ENCODE measurements at regions of chr19 and their contacts with region 1.

Region 1: DNA sequence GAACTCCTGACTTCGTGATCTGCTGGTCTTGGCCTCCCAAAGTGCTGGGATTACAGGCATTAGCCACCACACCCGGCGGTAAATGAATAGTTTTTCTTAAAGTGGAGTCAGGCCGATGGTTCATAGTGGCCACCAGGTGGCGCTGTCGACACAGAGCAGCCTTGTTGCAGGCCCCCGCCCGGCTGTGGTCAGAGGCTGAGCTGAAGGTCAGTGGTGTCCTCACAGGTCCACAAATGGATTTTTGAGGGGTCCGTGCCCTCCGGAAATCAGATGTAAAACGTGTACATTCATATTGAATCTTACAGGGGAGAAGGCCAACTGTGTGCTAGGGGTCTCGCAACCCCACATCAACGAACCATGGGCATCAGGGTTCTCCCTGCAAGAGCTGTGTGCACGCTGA is 13.4 kb upstream of the WDR18 start:
- DNase-seq: peak in 1 of 2 experiments; percentile 63
- H3K4me3 ChIP-seq: no peak overlapping the region
- H3K27ac ChIP-seq: no peak overlapping the region
- H3K4me1 ChIP-seq: peaks cover 0 to 3% (median 0%) of the 10 kb centered on the region in 4 experiments; a peak in 1 of 7 replicates
- H3K27me3 ChIP-seq: no peaks in the 10 kb centered on the region
- CTCF ChIP-seq: peak; percentile 79 to 90 (median 79)
- EP300 ChIP-seq: no peak
- POLR2A ChIP-seq: no peak
- RAD21 ChIP-seq: peak; percentile 46 to 63

Region 2: GRCh38 chr19:778910-779653 is 191.6 kb before region 1 on chr19:
- CTCF ChIA-PET with region 1: no interaction called
- POLR2A ChIA-PET with region 1: no interaction called
- DNase-seq: no peak
- H3K4me3 ChIP-seq: no peak overlapping the region
- H3K27ac ChIP-seq: no peak overlapping the region
- H3K4me1 ChIP-seq: peaks cover 7 to 15% (median 11%) of the 10 kb centered on the region in 4 experiments
- H3K27me3 ChIP-seq: no peaks in the 10 kb centered on the region
- CTCF ChIP-seq: no peak
- EP300 ChIP-seq: no peak
- POLR2A ChIP-seq: no peak
- RAD21 ChIP-seq: no peak

Region 3: GRCh38 chr19:925526-926322 is 45.0 kb before region 1 on chr19 and contains the start of gene ARID3A:
- CTCF ChIA-PET with region 1: interaction called, 23 read pairs
- POLR2A ChIA-PET with region 1: interaction called, 7 read pairs
- DNase-seq: peak in 1 of 2 experiments; percentile 75
- H3K4me3 ChIP-seq: peak within 1 kb of the TSS; percentile 65 to 97 (median 76)
- H3K27ac ChIP-seq: peak within 1 kb of the TSS; percentile 39; the same call in 1 of the 2 replicates
- H3K4me1 ChIP-seq: peaks cover 2 to 8% (median 6%) of the 10 kb centered on the region in 4 experiments
- H3K27me3 ChIP-seq: peaks cover 6 to 8% (median 8%) of the 10 kb centered on the region in 4 experiments
- CTCF ChIP-seq: no peak
- EP300 ChIP-seq: no peak
- POLR2A ChIP-seq: no peak
- RAD21 ChIP-seq: no peak
- total RNA-seq, gene ARID3A: 77.4 and 78.4 TPM in 2 replicates

Region 4: DNA sequence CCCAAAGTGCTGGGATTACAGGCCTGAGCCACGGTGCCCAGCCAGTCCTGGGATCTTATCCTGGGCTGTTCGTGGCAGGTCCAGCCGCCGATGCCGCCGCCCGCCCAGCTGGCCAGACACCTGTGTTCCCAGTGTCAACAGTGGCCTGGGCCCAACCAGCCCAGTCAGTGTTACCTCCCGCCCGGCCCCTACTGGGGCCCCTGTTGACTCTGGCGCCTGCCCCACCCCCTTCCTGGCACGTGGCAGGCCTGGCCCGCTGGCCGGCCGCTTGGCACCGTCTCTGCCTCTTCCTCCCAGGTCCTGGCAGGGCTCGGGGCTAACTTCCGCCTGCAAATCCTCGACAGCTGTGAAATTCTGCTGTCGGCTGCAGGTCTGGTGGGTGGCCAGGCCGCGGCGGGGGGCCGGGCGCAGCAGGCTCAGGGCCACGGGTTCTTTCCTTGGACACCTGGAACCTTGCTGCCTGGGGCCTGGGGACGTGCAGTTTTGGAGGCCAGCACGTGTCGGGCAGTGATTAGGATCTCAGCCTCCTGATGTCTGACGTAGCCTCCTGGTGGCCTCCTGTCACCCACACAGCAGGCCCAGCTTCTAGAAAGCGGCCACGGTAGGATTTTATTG is 35.7 kb before region 1 on chr19:
- CTCF ChIA-PET with region 1: interaction called, 14 read pairs
- POLR2A ChIA-PET with region 1: interaction called, 4 read pairs
- DNase-seq: no peak
- H3K4me3 ChIP-seq: no peak overlapping the region
- H3K27ac ChIP-seq: no peak overlapping the region
- H3K4me1 ChIP-seq: peaks cover 0 to 16% (median 4%) of the 10 kb centered on the region in 4 experiments; a peak in 4 of 7 replicates
- H3K27me3 ChIP-seq: no peaks in the 10 kb centered on the region
- CTCF ChIP-seq: no peak
- EP300 ChIP-seq: no peak
- POLR2A ChIP-seq: no peak
- RAD21 ChIP-seq: no peak

Region 5: DNA sequence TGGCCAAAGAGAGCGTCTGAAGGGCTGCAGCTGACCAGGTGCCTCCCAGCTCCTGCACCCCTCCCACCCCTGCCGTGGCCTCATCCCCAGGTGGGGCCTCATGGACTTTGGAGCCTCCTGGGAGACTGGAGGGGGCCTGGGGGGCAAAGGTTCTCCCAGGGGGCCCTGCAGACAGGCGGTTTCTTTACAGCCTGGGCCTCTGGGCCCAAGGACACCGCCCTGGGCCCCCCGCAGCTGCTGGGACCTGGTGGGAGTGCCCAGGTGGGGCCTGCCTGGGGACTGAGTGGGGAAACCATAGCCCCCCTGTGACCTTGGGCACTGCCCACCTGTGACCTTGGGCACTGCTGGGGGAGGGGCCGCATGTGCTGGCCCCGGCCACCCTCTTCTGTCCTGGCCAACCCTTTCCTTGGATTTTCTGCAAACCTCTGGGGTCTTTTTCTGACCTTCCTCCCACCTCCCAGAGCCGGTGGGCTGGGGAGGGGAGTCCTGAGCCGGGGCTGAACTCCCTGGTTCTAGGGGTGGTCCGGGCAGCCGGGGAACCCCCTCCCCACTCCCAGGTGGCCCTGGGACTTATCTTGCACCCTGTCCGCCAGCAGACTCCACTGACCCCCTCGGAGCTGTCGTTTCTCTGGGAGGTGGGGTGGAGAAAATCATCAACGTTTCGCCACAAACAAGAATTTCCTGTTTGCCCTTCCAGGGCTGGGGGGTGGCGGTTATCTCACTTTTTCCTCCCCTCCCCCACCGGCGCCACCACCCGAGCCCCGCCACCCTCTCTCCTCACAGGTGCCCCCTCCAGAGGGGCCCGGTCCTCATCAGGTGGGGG is 17.9 kb before region 1 on chr19:
- CTCF ChIA-PET with region 1: interaction called, 16 read pairs
- POLR2A ChIA-PET with region 1: interaction called, 10 read pairs
- DNase-seq: no peak
- H3K4me3 ChIP-seq: peak overlapping the region in 3 of 4 experiments; percentile 2 to 51 (median 23); a peak in 4 of 8 replicates
- H3K27ac ChIP-seq: peak overlapping the region; percentile 11; the same call in 1 of the 2 replicates
- H3K4me1 ChIP-seq: peaks cover 5 to 46% (median 23%) of the 10 kb centered on the region in 4 experiments
- H3K27me3 ChIP-seq: no peaks in the 10 kb centered on the region
- CTCF ChIP-seq: no peak
- EP300 ChIP-seq: no peak
- POLR2A ChIP-seq: no peak
- RAD21 ChIP-seq: no peak

Region 6: DNA sequence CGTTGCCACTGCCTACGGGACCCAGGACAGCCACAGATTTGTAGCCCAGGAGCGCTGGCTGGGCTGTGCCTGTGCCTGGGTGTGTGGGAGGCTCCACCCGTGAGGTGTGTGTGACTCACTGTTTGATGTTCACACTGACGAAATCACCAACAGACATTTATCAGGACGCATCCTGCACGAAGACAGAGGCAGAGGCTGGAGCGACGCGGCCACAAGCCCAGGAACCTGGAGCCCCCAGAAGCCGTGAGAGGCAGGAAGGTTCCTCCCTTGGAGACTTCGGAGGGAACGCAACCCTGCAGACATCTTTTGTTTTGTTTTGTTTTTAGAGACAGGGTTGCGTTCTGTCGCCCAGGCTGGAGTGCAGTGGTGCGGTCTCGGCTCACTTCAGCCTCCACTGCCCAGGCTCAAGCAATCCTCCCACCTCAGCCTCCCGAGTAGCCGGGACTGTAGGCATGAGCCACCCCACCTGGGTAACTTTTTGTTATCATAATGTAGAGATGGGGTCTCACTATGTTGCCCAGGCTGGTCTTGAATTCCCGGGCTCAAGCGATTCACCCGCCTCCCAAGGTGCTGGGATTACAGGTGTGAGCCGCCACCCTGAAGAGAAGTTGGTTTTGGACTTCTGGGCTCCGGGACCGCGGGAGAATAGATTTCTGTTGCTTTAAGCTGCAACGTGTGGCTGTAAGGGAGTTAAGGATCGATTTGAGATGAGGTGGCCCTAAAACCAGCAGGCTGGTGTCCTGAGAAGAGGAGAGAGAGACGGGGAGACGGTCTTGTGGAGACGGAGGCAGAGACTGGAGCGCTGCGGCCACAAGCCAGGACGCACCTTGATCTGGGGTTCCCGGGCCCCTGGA is 11.5 kb before region 1 on chr19:
- CTCF ChIA-PET with region 1: interaction called, 18 read pairs
- POLR2A ChIA-PET with region 1: interaction called, 10 read pairs
- DNase-seq: no peak
- H3K4me3 ChIP-seq: no peak overlapping the region
- H3K27ac ChIP-seq: peak overlapping the region; percentile 36; the same call in 1 of the 2 replicates
- H3K4me1 ChIP-seq: peaks cover 5 to 35% (median 19%) of the 10 kb centered on the region in 4 experiments
- H3K27me3 ChIP-seq: no peaks in the 10 kb centered on the region
- CTCF ChIP-seq: no peak
- EP300 ChIP-seq: no peak
- POLR2A ChIP-seq: no peak
- RAD21 ChIP-seq: no peak

Region 7: DNA sequence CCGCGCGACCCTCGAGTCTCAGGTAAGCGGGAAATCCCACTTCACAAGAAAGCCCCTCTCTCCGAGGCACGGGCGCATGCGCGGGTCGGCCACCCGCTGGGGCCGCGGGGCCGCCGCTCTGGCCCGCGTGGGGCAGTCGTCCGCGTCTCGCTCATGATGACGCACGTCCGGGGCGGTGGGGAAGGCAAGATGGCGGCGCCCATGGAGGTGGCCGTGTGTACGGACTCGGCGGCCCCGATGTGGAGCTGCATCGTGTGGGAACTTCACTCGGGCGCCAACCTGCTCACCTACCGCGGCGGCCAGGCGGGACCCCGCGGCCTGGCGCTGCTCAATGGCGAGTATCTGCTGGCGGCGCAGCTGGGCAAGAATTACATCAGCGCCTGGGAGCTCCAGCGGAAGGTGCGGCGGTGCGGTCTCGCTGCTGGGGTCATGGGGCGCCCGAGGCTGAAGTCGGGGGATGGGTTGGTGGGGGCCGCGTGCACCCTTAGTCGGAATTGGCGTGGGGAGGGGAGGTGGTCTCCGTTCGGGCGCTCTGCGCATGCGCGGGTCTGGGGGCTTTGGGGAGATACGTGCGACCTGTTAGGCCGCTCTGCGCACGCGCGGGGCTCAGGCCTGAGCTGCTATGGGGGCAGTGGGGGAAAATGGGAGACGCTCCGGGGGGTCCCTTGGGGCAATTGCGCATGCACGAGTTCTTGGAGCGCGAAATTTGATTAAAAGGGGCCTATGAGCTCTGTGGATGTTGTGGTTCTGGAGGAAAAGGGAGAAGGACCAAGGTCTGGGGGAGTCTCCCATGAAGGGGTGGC is 13.7 kb after region 1 on chr19 and contains the start of gene WDR18:
- CTCF ChIA-PET with region 1: interaction called, 62 read pairs
- POLR2A ChIA-PET with region 1: interaction called, 13 read pairs
- DNase-seq: peak; percentile 76 to 95
- H3K4me3 ChIP-seq: peak within 1 kb of the TSS; percentile 87 to 99 (median 92)
- H3K27ac ChIP-seq: peak within 1 kb of the TSS; percentile 96
- H3K4me1 ChIP-seq: peaks cover 0 to 14% (median 9%) of the 10 kb centered on the region in 4 experiments; a peak in 5 of 7 replicates
- H3K27me3 ChIP-seq: no peaks in the 10 kb centered on the region
- CTCF ChIP-seq: no peak
- EP300 ChIP-seq: no peak
- POLR2A ChIP-seq: peak; percentile 66 to 76
- RAD21 ChIP-seq: no peak
- total RNA-seq, gene WDR18: 87.7 and 90.1 TPM in 2 replicates

Measured in H1 (cell line).